T-cell (primary cell): ENCODE measurements at regions of chr5 and their contacts with region 1.

Region 1: DNA sequence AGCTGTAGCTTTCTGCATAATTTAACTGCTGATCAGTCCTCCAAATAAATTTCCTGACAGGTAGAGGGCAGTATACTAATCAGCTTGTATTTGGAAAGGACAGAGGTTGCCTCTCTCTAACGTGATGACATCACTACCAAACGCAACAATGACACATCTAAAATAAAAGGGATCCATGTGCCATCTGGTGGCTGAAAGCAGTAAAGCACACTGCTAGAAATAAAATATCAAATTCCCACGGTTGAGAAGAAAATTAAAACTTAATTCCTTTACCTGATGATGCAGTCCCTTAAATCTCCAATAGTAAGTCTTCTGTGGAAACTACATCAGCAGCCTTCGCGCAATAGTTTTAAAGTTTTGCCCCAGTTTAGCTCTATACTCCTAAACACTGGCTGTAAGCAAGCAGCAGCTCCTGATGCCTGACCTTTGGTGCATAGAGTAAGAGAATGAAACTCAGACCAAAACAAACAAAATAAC is 54.5 kb downstream of the DIAPH1 start:
- DNase-seq: peak; percentile 4 to 94 (median 63)
- ATAC-seq: peak; percentile 83 to 92 (median 88)
- H3K4me3 ChIP-seq: no peak overlapping the region
- H3K4me3 Mint-ChIP-seq: no peak overlapping the region
- H3K27ac ChIP-seq: peak overlapping the region; percentile 65
- H3K27ac Mint-ChIP-seq: peak overlapping the region; percentile 77 to 84
- H3K4me1 ChIP-seq: peaks cover 2% of the 10 kb centered on the region in 2 experiments
- H3K4me1 Mint-ChIP-seq: peaks cover 41 to 45% (median 42%) of the 10 kb centered on the region in 3 donors
- H3K27me3 ChIP-seq: no peaks in the 10 kb centered on the region
- H3K27me3 Mint-ChIP-seq: no peaks in the 10 kb centered on the region

Region 2: DNA sequence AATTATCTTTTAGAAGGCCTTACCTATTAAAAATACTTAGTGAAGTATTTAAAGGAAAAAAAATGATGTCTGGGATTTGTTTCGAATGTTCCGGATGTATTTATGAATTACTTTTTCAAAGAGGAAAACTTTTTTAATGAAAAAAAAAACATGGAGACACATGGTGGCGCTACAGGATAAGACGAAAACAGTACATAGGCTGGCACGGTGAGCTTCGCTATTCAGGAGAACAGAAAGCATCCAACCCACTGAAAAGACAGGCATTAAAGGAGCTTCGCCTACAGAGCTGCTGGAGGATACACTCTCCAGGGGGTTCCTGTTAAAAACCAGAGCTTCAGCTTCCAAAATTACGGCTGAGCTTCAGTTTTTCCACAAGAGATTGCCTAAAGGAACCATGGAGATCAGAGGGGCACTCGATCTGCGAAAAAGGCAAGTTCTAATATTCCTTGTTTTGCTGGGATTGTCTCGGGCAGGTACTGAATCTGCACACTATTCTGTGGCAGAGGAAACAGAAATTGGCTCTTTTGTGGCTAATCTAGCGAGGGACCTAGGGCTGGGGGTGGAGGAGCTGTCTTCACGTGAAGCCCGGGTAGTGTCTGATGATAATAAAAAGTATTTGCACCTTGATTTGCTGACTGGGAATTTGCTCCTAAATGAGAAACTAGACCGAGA is 341.0 kb before region 1 on chr5 and contains the start of gene PCDHB14:
- CTCF ChIA-PET with region 1: interaction called, 5 to 16 read pairs
- POLR2A ChIA-PET with region 1: no interaction called
- DNase-seq: peak in 1 of 35 experiments; percentile 40
- ATAC-seq: no peak
- H3K4me3 ChIP-seq: no peak within 1 kb of the TSS
- H3K4me3 Mint-ChIP-seq: peak within 1 kb of the TSS in 2 of 3 donors; percentile 4 to 26
- H3K27ac ChIP-seq: no peak within 1 kb of the TSS
- H3K27ac Mint-ChIP-seq: no peak within 1 kb of the TSS
- H3K4me1 ChIP-seq: no peaks in the 10 kb centered on the region
- H3K4me1 Mint-ChIP-seq: peaks cover 0 to 7% (median 6%) of the 10 kb centered on the region in 3 donors
- H3K27me3 ChIP-seq: peaks cover 4 to 24% of the 10 kb centered on the region in 2 experiments
- H3K27me3 Mint-ChIP-seq: peaks cover 57 to 64% of the 10 kb centered on the region in 2 donors
- total RNA-seq, gene PCDHB14: 0.12 TPM in 1 of 5 donors, not detected in the others

Region 3: DNA sequence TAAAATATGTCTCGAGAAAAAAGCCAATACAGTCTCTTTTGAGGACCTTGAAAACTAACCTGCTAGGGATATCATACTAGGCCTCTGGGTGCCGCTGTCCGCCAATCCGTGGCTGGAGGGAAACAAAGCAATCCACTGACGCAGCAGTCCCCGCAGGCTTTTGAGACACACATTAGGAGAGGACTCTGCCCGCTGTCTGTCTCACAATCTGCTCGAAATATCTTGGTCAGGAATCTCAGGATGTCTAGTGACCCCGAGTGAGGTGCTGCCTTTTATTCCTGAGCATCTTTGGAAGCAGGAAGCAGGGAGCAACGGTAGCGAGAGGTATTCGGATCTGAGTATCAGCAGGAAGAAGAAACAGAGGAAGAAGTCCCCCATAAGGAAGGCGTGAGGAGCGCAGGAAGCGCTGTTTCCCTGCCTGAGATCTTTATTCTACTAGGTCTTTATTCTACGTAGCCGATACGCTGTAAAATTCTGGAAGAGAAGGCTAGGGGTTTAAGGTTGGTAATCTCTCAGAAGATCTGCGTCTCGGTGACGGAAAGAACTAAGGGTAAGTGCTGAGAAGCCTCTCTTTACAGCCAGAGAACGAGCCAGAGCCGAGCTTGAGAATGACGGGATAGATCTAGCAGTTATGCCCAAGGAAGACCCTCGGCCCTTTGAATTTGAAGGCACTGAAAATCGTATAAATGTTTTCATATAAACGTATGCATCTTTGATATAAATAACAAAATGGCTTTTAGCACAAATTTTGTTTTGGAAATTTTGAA is 238.0 kb before region 1 on chr5:
- CTCF ChIA-PET with region 1: interaction called, 4 to 53 read pairs
- POLR2A ChIA-PET with region 1: interaction called in 1 of 2 experiments, 11 read pairs
- DNase-seq: peak; percentile 34 to 78 (median 62)
- ATAC-seq: peak; percentile 92 to 95 (median 94)
- H3K4me3 ChIP-seq: peak overlapping the region; percentile 45 to 50
- H3K4me3 Mint-ChIP-seq: peak overlapping the region; percentile 84 to 91 (median 86)
- H3K27ac ChIP-seq: peak overlapping the region; percentile 3
- H3K27ac Mint-ChIP-seq: peak overlapping the region; percentile 92 to 93
- H3K4me1 ChIP-seq: peaks cover 0 to 8% of the 10 kb centered on the region in 2 experiments
- H3K4me1 Mint-ChIP-seq: peaks cover 11 to 13% (median 13%) of the 10 kb centered on the region in 3 donors
- H3K27me3 ChIP-seq: peaks cover 6 to 29% of the 10 kb centered on the region in 2 experiments
- H3K27me3 Mint-ChIP-seq: peaks cover 33 to 48% of the 10 kb centered on the region in 2 donors

Region 4: GRCh38 chr5:141412854-141413539 is 151.3 kb before region 1 on chr5 and contains the start of gene PCDHGA10:
- CTCF ChIA-PET with region 1: interaction called, 6 to 29 read pairs
- POLR2A ChIA-PET with region 1: interaction called in 1 of 2 experiments, 8 read pairs
- DNase-seq: peak in 32 of 35 experiments; percentile 15 to 69 (median 46)
- ATAC-seq: peak; percentile 78 to 84 (median 82)
- H3K4me3 ChIP-seq: peak within 1 kb of the TSS; percentile 41 to 68
- H3K4me3 Mint-ChIP-seq: peak within 1 kb of the TSS; percentile 77 to 85 (median 78)
- H3K27ac ChIP-seq: no peak within 1 kb of the TSS
- H3K27ac Mint-ChIP-seq: peak within 1 kb of the TSS; percentile 34
- H3K4me1 ChIP-seq: peaks cover 0 to 18% of the 10 kb centered on the region in 2 experiments
- H3K4me1 Mint-ChIP-seq: peaks cover 22 to 35% (median 23%) of the 10 kb centered on the region in 3 donors
- H3K27me3 ChIP-seq: peaks cover 15 to 63% of the 10 kb centered on the region in 2 experiments
- H3K27me3 Mint-ChIP-seq: peaks cover 57 to 80% of the 10 kb centered on the region in 2 donors
- total RNA-seq, gene PCDHGA10: 0.10 to 0.53 (median 0.32) TPM

Region 5: DNA sequence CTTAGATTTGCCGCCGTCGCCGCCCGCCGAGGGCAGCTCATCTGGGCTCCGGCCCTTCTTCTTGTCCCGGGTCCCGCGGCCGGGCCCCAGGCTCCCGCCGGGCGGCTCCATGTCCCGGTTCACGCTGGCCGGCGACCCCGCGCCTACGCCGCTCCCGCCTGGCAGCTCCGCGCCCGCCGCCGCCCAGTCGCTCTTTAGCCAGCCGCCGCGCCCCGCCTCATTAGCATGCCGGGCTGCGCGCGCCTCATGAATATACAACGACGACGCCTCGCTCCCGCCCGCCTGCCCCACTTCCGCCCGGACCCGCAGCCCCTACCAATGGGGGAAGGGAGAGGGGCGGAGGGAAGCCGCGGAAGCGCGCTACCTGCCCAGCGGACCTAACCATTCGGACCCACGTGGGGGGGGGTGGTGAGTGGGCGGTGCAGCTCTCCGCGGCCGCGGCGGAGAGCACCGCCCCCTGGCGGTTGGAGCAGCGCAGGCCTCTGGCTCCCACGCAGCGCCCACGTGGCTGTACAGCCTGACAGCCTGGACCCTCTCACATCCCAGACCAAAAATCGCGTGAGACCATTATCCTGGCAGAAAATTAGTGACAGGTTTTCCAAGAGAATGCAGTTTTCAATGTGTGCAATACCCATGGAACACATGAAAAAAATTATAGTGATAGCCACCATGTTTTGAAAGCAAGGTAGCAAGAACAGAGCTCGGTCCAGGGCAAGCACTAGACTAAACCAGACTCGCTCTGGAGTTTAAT is 54.7 kb after region 1 on chr5 and contains the start of gene DIAPH1:
- CTCF ChIA-PET with region 1: interaction called, 3 to 33 read pairs
- POLR2A ChIA-PET with region 1: interaction called in 1 of 2 experiments, 5 read pairs
- DNase-seq: peak; percentile 94 to 99 (median 97)
- ATAC-seq: peak; percentile 92 to 94 (median 93)
- H3K4me3 ChIP-seq: peak within 1 kb of the TSS; percentile 94 to 97
- H3K4me3 Mint-ChIP-seq: peak within 1 kb of the TSS; percentile 94 to 99 (median 98)
- H3K27ac ChIP-seq: peak within 1 kb of the TSS; percentile 86
- H3K27ac Mint-ChIP-seq: peak within 1 kb of the TSS; percentile 96 to 97
- H3K4me1 ChIP-seq: peaks cover 29 to 39% of the 10 kb centered on the region in 2 experiments
- H3K4me1 Mint-ChIP-seq: peaks cover 49 to 61% (median 59%) of the 10 kb centered on the region in 3 donors
- H3K27me3 ChIP-seq: no peaks in the 10 kb centered on the region
- H3K27me3 Mint-ChIP-seq: no peaks in the 10 kb centered on the region
- total RNA-seq, gene DIAPH1: 190 to 271 (median 211) TPM

Region 6: GRCh38 chr5:141663506-141663905 is 99.3 kb after region 1 on chr5:
- CTCF ChIA-PET with region 1: no interaction called
- POLR2A ChIA-PET with region 1: no interaction called
- DNase-seq: no peak
- ATAC-seq: no peak
- H3K4me3 ChIP-seq: no peak overlapping the region
- H3K4me3 Mint-ChIP-seq: no peak overlapping the region
- H3K27ac ChIP-seq: no peak overlapping the region
- H3K27ac Mint-ChIP-seq: no peak overlapping the region
- H3K4me1 ChIP-seq: peaks cover 0 to 5% of the 10 kb centered on the region in 2 experiments
- H3K4me1 Mint-ChIP-seq: peaks cover 5% of the 10 kb centered on the region in 3 donors
- H3K27me3 ChIP-seq: no peaks in the 10 kb centered on the region
- H3K27me3 Mint-ChIP-seq: no peaks in the 10 kb centered on the region